Panc1 (cell line): ENCODE measurements at regions of chr20 and their contacts with region 1.

Region 1: GRCh38 chr20:54062812-54063280 is 7.5 kb downstream of the BCAS1 start:
- DNase-seq: peak; percentile 58
- ATAC-seq: peak; percentile 69
- H3K4me3 ChIP-seq: no peak overlapping the region
- H3K27ac ChIP-seq: peak overlapping the region; percentile 97
- H3K4me1 ChIP-seq: peaks cover 67% of the 10 kb centered on the region
- H3K27me3 ChIP-seq: no peaks in the 10 kb centered on the region
- CTCF ChIP-seq: peak; percentile 83

Region 2: DNA sequence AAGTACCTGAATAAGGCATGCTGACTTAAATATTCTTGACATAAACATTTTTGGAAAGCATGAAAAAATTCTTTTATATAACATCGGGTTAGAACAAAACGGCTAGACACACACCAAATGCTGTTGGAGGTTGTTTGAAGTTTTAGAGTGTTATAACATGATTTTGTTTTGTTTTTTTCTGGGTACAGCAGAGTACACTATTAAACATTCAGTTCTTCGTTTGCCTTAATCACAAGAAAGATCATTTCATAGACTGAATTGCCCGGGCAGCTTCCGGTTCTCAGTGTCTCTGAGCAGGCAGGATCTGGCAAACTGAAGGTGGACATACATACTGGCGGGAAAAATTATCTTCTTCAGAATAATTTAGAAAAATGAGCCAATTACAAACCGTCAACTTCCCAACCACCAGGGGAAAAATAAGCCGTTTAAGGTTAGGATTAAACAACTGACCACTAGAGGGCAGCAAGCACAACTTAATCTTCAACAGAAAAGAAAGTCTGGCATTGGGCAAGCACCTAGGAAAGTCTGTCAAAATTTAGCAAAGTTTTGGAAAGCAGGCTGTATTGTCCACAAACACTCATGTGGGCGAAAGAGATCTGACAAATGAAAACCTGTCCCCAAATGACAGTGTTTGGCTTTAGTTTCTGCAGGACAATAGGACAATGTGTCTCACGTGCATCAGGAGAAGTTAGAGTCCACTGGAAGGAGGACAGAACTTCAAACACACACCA is 484.2 kb before region 1 on chr20:
- CTCF ChIA-PET with region 1: no interaction called
- POLR2A ChIA-PET with region 1: no interaction called
- in situ Hi-C with region 1: no loop called
- intact Hi-C with region 1: loop called (anchors 10 kb)
- DNase-seq: no peak
- ATAC-seq: peak; percentile 27
- H3K4me3 ChIP-seq: peak overlapping the region; percentile 57 to 66
- H3K27ac ChIP-seq: peak overlapping the region; percentile 100
- H3K4me1 ChIP-seq: peaks cover 69% of the 10 kb centered on the region
- H3K27me3 ChIP-seq: no peaks in the 10 kb centered on the region
- CTCF ChIP-seq: peak; percentile 82